Breast epithelium (tissue), 4 donors: ENCODE measurements at regions of chr16 and their contacts with region 1.

Region 1: DNA sequence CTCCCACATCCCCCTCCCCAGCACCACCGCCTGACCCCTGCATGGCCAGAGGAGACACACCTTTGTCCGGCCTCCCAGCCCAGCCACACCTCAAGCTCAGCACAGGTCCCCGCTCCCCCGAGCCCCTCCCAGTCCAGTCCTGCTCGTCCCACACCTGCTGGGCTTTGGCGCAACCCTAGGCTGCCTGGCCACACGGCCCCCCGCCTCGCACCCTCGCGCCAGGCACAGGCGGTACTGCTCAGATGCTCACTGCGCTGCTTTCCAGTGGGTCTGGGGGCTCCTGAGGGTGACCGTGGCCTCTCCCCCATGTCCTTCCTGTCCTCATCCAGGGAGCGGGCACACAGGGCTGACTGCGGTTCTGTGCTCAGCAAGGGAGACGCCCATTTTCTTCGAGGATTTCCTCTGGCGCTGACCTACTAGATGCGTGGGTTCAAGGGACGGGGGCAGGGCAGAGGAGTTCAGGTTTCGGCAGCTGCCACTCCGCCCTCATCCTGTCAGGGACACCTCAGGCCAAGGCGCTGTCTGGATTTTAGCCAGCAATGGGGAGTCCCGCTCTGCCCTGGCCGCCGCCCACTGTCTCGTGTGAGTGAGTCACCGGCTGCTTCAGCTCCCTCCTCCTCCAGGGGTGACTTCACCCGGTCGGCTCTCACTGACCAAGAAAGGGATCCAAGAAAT is 118.0 kb upstream of the ZNF469 start:
- DNase-seq: peak; percentile 97
- H3K4me3 ChIP-seq: peak overlapping the region in 2 of 3 donors; percentile 22 to 25
- H3K27ac ChIP-seq: peak overlapping the region; percentile 48 to 75
- H3K4me1 ChIP-seq: peaks cover 0 to under 1% of the 10 kb centered on the region in 2 donors
- H3K27me3 ChIP-seq: no peaks in the 10 kb centered on the region
- CTCF ChIP-seq: no peak
- POLR2A ChIP-seq: no peak

Region 2: DNA sequence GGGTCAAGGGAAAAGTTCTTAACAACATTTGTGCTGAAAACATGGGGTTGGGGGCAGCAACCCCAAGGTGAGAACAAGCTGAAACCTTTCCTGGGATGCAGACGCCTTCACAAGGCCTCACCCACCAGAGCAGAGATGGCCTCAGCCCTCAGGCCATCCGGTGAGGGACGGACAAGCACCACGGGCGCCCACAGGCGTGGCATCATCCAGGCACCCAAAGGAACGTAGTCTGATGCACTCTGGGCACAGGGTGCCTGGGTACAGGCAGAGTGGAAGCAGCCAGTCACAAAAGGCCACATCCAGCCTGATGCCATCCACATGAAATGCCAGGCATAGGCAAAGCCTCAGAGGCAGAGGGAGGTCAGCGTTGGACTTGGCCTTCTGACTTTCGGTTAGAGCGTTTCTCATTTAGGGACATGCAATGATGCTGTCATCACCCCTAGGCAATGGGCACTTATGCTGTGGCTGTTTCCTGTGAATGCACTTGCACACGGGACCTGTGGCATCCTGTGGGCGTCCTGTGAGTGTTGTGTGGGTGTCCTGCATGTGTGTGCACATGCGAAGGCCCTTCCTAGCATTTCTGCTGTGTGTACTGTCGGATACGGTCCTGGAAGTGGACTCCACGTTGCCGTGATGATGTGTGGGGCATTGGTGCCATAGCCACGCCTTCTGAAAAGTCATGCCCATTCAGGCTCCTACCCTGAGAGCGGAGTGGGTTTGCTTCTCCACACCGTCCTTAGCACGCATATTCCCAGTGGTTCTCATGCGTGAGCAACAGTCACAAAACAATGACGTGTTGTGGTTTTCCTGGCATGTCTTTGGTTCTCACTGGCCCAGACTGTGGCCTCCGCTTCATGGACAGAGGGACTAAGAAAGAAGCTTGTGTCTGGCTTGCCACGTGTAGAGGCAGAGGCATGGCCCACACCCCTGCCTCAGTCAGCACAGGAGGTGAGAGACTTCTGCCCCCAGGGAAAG is 65.3 kb after region 1 on chr16:
- intact Hi-C with region 1: loop called (anchors 5 kb)
- DNase-seq: no peak
- H3K4me3 ChIP-seq: no peak overlapping the region
- H3K27ac ChIP-seq: peak overlapping the region in 1 of 2 donors; percentile 45
- H3K4me1 ChIP-seq: peaks cover 0 to 3% of the 10 kb centered on the region in 2 donors
- H3K27me3 ChIP-seq: no peaks in the 10 kb centered on the region
- CTCF ChIP-seq: no peak
- POLR2A ChIP-seq: no peak